ENCODE measurements at regions of chr18 and their contacts with region 1.

Region 1: GRCh38 chr18:23131693-23132319 is 3.5 kb upstream of the CABLES1 start:
- DNase-seq: peak; percentile 20
- H3K4me3 ChIP-seq: no peak overlapping the region
- H3K27me3 ChIP-seq: no peaks in the 10 kb centered on the region
- CTCF ChIP-seq: peak; percentile 73

Region 2: DNA sequence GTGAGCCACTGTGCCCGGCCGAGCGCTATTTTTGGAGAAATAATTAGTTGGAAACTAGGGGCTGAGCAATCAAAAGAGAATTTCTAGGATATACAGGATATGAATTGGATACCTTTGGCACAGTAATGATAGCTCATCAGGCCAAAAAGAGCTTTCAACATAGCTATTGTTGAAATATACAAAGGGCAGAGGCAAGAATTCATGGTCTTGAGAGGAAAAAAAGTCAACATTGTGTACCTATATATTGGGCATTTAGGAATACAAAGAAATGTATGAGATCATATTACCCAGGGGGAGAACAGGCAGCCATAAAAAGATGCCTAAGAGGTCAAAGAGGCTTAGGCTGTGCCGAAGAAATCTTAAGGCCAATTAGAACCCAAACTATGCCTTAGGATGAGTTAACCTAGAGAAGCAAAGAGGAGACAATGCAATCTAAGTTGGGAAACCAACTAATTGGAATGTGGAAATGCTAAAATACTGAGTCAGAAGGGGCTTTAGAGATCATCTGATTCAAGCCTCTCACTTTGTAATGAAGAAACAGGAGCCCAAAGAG is 99.7 kb before region 1 on chr18:
- CTCF ChIA-PET with region 1: interaction called, 47 read pairs
- POLR2A ChIA-PET with region 1: no interaction called
- DNase-seq: peak; percentile 53
- H3K4me3 ChIP-seq: no peak overlapping the region
- H3K27me3 ChIP-seq: no peaks in the 10 kb centered on the region
- CTCF ChIP-seq: no peak

Region 3: DNA sequence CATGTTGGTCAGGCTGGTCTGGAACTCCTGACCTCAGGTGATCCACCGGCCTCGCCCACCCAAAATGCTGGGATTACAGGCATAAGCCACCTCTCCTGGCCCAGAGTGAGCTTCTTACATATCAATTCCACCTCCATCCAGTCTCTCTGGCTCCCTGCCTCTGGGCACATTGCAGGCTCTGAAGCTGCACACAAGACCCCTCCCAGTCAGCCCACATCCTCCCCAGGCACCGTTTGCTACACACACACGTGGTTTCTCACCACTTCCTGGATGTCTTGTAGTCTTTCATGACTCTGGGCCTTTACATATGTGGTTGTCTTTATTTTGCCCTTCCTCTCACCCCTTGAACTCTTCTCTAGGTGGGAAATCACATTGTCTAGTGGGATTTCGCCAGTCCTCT is 60.5 kb before region 1 on chr18:
- CTCF ChIA-PET with region 1: no interaction called
- POLR2A ChIA-PET with region 1: no interaction called
- DNase-seq: no peak
- H3K4me3 ChIP-seq: no peak overlapping the region
- H3K27me3 ChIP-seq: no peaks in the 10 kb centered on the region
- CTCF ChIP-seq: no peak

Region 4: DNA sequence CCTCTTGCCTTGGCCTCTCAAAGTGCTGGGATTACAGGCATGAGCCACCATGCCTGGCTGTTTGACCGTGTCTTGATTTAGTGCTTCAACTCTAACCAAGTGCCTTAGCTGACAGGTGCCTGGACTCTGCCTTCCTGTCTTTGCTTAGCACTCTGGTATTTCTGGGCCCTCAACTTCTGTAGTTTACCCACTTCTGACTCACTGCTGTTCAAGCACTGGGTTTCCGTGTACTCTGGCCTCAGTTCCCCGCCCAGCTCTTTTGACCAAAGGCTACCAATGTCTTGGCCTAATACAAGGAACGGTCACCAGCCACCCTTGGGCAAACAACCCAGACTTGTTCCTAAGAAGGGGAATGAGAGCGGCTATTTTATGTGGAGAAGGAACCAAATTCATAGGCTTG is 32.2 kb before region 1 on chr18:
- CTCF ChIA-PET with region 1: no interaction called
- POLR2A ChIA-PET with region 1: no interaction called
- DNase-seq: no peak
- H3K4me3 ChIP-seq: no peak overlapping the region
- H3K27me3 ChIP-seq: no peaks in the 10 kb centered on the region
- CTCF ChIP-seq: no peak

Region 5: DNA sequence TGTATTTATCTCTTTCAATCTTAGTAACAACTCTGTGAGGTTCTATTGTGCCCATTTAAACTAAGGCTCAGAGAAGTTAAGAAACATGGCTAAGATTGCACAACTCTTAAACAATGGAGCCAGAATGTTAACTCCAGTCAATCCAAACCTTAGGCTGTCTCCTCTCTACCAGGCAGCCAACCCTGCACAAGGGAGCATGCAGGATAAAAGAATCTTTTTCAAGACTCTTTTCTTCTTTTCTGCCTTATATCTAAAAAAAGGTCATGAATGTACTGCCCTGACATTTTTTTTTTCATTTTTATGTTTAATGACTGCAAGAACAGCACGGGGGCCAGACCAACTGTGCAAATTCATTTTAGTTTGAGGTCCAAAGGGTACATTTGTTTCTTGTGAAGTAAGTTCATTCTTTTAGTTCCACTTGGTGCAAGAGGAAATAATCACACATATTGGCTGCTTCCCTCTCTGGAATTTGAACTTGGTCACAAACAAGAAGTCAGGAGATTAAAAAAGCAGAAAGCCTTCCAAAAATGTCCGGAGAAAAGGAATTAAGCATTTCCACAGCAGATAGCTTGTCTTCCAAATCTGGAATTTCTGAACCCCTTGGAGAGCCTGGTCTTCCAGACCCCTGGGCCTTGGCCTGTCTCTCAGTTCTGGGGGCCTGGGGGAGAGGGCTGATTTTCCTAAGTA is 225.3 kb after region 1 on chr18:
- CTCF ChIA-PET with region 1: interaction called, 16 read pairs
- POLR2A ChIA-PET with region 1: no interaction called
- DNase-seq: peak; percentile 73
- H3K4me3 ChIP-seq: no peak overlapping the region
- H3K27me3 ChIP-seq: no peaks in the 10 kb centered on the region
- CTCF ChIP-seq: no peak

Region 6: GRCh38 chr18:23377669-23378301 is 246.0 kb after region 1 on chr18:
- CTCF ChIA-PET with region 1: interaction called, 108 read pairs
- POLR2A ChIA-PET with region 1: interaction called, 3 read pairs
- DNase-seq: peak; percentile 69
- H3K4me3 ChIP-seq: no peak overlapping the region
- H3K27me3 ChIP-seq: no peaks in the 10 kb centered on the region
- CTCF ChIP-seq: no peak

Region 7: DNA sequence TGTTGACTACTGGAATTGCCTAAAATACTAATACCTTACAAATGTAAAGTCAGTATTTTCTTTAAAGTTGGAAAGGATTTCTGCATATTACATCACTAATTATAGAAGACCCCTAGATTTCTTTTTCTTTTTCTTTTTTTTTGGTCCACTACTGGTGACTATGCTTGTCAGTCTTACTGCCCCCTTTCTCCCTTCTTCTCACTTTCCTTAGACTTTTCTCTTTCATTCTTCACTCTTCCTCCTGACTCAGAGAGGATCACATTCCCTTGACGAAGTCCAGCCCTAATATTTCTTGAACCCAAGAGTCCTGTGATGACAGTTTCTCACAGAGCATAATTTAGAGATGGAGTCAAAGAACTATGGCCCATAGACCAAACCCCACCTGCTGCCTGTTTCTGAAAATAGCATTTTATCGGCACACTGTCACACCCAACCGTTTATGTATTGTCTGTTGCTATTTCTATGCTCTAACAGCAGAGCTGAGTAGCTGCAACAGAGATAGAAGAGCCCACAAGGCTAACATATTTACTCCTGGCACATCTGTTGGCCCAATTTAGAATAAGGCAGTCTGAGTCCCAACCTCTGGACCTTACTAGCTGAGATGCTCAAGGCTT is 280.7 kb after region 1 on chr18:
- CTCF ChIA-PET with region 1: interaction called, 29 read pairs
- POLR2A ChIA-PET with region 1: no interaction called
- DNase-seq: no peak
- H3K4me3 ChIP-seq: no peak overlapping the region
- H3K27me3 ChIP-seq: no peaks in the 10 kb centered on the region
- CTCF ChIP-seq: no peak